CD4-positive, alpha-beta T cell (primary cell): ENCODE measurements at regions of chr2 and their contacts with region 1.

Region 1: DNA sequence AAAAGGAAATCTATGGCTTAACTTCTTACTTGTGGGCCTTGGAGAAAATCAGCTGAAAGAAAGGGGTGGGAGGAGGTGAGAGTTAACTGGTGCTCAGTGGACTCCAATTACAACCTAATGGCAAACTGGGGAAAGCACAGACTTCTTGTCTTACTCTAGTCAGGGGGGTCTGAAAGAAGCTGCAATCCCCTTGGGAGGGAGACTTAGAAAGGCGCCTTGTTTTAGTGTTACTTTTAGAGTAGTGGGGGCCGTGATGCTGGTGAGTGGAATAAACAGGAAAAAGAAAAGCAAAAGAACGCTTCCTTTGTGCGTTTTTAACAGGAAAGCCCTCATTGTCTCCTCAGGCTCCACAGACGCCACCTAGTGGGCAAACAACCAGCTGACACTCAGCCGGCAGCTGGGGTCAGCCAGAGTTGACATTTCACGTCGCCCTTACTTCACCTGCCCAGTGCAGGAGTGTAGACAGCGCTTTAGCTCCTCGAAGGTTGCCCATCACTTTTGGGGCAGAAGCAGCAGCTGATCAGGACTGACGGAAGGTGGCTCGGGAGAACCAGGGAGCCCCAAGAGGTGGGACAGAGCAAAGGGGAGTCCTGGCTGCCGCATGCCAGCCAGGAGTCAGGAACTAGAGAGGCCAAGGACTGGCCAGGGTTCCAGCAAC is 55.9 kb upstream of the GORASP2 start:
- DNase-seq: peak; percentile 56 to 81 (median 65)
- ATAC-seq: peak; percentile 92
- H3K4me3 ChIP-seq: peak overlapping the region; percentile 34
- H3K4me3 Mint-ChIP-seq: peak overlapping the region; percentile 36
- H3K27ac ChIP-seq: no peak overlapping the region
- H3K27ac Mint-ChIP-seq: no peak overlapping the region
- H3K4me1 ChIP-seq: peaks cover 12% of the 10 kb centered on the region
- H3K4me1 Mint-ChIP-seq: peaks cover 10% of the 10 kb centered on the region
- H3K27me3 ChIP-seq: no peaks in the 10 kb centered on the region
- H3K27me3 Mint-ChIP-seq: no peaks in the 10 kb centered on the region
- CTCF ChIP-seq: peak; percentile 86

Region 2: DNA sequence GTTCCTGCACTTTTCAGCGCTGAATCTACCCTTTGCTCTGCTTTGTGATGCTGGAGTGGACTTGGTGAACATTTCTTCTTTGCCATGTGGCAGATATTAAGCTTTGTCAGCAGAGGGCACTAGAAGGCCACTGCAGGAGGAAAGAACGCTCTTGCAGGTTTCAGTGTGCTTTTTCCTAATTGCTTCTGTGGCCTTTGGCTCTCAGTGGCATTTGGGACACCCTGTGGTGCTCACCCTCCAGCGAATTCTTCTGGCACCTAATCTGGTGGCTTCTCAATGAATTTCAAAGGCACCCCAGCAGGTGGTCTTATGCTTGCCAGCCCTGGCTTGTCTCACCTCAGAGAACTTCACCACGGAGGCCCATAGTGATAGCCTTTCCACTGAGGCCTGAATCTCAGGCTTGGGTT is 548.5 kb before region 1 on chr2:
- CTCF ChIA-PET with region 1: interaction called, 4 read pairs
- POLR2A ChIA-PET with region 1: no interaction called
- intact Hi-C with region 1: loop called (anchors 2 kb)
- DNase-seq: peak in 8 of 14 experiments; percentile 1 to 55 (median 21)
- ATAC-seq: peak; percentile 43
- H3K4me3 ChIP-seq: no peak overlapping the region
- H3K4me3 Mint-ChIP-seq: no peak overlapping the region
- H3K27ac ChIP-seq: no peak overlapping the region
- H3K27ac Mint-ChIP-seq: no peak overlapping the region
- H3K4me1 ChIP-seq: no peaks in the 10 kb centered on the region
- H3K4me1 Mint-ChIP-seq: no peaks in the 10 kb centered on the region
- H3K27me3 ChIP-seq: no peaks in the 10 kb centered on the region
- H3K27me3 Mint-ChIP-seq: peaks cover 4% of the 10 kb centered on the region
- CTCF ChIP-seq: peak; percentile 51

Region 3: DNA sequence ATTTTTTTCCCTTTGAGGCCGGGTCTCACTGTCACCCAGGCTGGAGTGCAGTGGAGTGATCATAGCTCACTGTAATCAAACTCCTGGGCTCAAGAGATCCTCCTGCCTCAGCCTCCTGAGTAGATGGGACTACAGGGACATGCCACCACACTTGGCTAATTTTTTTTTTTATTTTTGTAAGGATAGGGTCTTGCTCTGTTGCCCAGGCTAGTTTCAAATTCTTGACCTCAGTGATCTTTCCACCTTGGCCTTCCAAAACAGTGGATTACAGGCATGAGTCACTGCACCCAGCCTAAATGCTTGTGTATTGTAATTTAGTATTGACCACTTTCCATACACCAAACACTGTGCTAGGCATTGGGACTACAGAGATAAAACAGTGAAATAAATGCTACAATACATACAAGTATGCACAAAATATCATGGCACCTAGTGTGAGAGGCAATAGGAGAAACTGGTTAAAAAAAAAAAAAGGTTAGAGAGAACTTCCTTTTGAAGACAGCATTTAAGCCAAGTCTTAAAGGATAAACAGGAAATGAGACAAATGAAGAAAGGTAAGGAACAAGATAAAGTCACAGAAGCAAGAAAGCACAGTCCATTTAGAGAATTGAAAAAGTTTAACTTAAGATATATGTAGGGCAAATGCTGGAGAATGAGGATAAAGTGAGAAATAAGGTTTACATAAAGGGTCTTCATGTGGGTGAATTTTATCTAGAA is 169.2 kb after region 1 on chr2:
- CTCF ChIA-PET with region 1: no interaction called
- POLR2A ChIA-PET with region 1: no interaction called
- intact Hi-C with region 1: loop called in 1 of 2 experiments (anchors 5 kb)
- DNase-seq: peak in 2 of 14 experiments; percentile 23 to 54
- ATAC-seq: peak; percentile 57
- H3K4me3 ChIP-seq: no peak overlapping the region
- H3K4me3 Mint-ChIP-seq: peak overlapping the region; percentile 14
- H3K27ac ChIP-seq: peak overlapping the region in 1 of 2 donors; percentile 31
- H3K27ac Mint-ChIP-seq: peak overlapping the region; percentile 85
- H3K4me1 ChIP-seq: peaks cover 11% of the 10 kb centered on the region
- H3K4me1 Mint-ChIP-seq: peaks cover 32% of the 10 kb centered on the region
- H3K27me3 ChIP-seq: no peaks in the 10 kb centered on the region
- H3K27me3 Mint-ChIP-seq: no peaks in the 10 kb centered on the region
- CTCF ChIP-seq: no peak

Region 4: DNA sequence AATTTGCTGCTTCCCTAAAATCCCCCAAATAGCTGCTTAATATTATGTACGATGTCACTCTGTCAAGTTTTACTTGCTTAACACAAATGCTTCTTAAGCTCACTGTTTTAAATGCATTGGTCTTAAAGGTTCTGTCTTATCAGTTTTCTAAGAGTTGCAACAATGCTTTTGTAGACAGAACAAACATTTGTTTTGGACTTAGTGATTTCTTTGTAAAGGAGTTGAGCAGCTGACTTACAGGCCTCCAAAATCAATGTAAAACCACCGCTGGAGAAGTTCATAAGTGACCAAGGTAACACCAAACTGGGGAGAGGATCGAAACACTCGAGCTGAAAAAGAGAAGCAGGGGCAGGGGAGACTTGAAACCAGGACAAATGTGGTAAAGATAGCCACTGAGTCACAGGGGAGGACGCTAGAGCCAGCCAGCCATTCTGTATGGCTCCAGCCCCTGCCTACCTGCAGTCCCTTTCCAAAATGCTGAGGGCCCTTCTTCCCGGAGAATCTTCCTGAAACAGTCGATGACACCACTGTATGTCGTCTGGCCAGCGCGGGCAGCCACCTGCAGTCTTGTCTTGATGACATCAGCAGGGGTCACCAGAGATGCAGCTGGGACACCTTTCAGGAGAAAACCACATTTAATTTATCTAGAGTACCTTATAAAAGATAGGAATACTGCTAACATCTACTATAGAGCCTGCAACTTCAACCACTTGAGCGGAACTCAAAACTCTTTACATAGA is 914.3 kb after region 1 on chr2:
- CTCF ChIA-PET with region 1: no interaction called
- POLR2A ChIA-PET with region 1: no interaction called
- intact Hi-C with region 1: no loop called
- DNase-seq: no peak
- ATAC-seq: no peak
- H3K4me3 ChIP-seq: no peak overlapping the region
- H3K4me3 Mint-ChIP-seq: no peak overlapping the region
- H3K27ac ChIP-seq: no peak overlapping the region
- H3K27ac Mint-ChIP-seq: no peak overlapping the region
- H3K4me1 ChIP-seq: no peaks in the 10 kb centered on the region
- H3K4me1 Mint-ChIP-seq: no peaks in the 10 kb centered on the region
- H3K27me3 ChIP-seq: no peaks in the 10 kb centered on the region
- H3K27me3 Mint-ChIP-seq: no peaks in the 10 kb centered on the region
- CTCF ChIP-seq: no peak